ENCODE measurements at regions of chr7 and their contacts with region 1.

Region 1: DNA sequence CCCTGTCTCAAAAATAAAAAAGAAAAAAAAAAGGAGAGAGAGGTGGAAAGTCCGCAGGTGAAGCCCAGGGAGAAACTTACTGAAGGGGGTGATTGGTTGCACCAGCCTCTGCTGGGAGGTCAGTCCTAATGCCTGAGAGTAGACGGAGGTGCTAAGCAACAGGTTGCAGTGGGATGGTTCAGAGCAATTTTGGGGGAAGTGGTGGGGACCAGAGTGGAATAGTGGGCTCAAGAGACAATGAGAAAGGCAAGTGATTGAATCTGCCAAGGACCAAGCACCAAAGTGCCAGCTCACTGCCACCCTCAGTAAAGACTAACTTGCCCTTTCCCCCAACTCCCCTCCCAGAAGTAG is 90.2 kb upstream of the GTF2I start:
- H3K4me3 ChIP-seq: no peak overlapping the region
- H3K27ac ChIP-seq: no peak overlapping the region
- H3K4me1 ChIP-seq: no peaks in the 10 kb centered on the region
- CTCF ChIP-seq: no peak

Region 2: DNA sequence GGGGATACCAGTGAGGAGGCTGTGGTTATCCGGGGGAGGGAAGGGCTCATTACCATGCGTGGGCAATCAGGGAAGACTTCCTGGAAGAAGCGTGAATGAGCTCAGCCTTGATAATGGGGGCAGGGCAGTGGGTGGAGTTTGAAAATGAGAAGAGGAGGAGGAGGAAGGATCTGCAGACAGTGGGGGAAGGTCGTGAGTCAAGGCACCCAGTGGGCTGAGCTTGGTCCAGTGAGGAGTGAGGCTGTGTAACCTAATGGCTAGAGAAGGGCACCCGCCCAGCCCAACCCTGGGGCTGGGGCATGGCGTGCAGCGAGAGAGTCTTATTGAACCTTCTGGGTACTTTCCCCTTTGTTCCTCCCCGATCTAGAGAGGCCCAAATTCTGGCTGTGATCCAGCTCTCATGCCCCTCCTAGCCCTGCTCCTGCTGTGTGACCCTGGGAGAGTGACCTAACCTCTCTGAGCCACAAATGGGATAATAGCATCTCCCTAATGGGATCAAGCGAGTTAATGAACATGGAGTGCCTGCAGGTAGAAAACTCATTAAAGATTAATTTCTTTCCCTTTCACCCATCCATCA is 246.6 kb before region 1 on chr7:
- CTCF ChIA-PET with region 1: no interaction called
- POLR2A ChIA-PET with region 1: no interaction called
- H3K4me3 ChIP-seq: no peak overlapping the region
- H3K27ac ChIP-seq: no peak overlapping the region
- H3K4me1 ChIP-seq: no peaks in the 10 kb centered on the region
- CTCF ChIP-seq: no peak

Region 3: DNA sequence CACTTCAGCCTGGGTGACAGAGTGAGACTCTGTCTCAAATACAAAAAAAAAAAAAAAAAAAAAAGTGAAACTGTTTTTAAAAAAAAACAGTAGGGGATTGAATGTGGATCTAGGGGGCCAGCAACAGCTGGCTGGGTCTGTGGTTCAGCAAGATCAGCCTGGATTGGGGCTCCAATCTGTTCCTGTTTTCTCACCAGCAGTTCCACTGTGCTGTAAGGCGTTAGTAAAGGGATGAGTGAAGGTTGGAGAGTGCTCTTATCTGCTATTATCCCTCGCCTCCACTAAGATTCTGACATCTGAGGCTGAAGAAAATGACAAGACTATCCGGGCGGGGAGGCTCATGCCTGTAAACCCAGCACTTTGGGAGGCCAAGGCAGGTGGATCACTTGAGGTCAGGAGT is 155.2 kb before region 1 on chr7:
- CTCF ChIA-PET with region 1: interaction called, 33 read pairs
- POLR2A ChIA-PET with region 1: no interaction called
- H3K4me3 ChIP-seq: no peak overlapping the region
- H3K27ac ChIP-seq: no peak overlapping the region
- H3K4me1 ChIP-seq: no peaks in the 10 kb centered on the region
- CTCF ChIP-seq: no peak

Region 4: GRCh38 chr7:74417419-74417971 is 149.8 kb before region 1 on chr7:
- CTCF ChIA-PET with region 1: interaction called, 33 read pairs
- POLR2A ChIA-PET with region 1: no interaction called
- H3K4me3 ChIP-seq: no peak overlapping the region
- H3K27ac ChIP-seq: no peak overlapping the region
- H3K4me1 ChIP-seq: no peaks in the 10 kb centered on the region
- CTCF ChIP-seq: peak; percentile 80

Region 5: DNA sequence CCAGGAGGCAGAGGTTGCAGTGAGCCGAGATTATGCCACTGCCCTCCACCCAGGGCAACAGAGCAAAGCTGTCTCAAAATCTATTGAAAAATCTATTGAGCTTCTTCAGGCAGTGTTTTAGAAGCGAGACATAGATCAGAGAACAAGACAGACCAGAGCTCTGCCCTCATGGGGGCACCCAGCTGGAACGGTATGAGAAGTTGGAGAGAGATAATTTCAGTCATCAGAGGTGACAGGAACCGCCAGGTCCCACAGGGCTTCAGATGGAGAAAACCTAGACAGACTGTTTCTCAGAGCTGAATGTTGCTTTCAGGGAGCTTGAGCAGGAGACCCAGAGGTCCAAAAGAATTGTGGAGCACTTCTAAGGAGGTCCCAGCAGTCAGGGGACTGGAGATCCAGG is 127.7 kb before region 1 on chr7:
- CTCF ChIA-PET with region 1: interaction called, 10 read pairs
- POLR2A ChIA-PET with region 1: no interaction called
- H3K4me3 ChIP-seq: no peak overlapping the region
- H3K27ac ChIP-seq: no peak overlapping the region
- H3K4me1 ChIP-seq: 0 out of 2 replicates have a peak, but pooled peaks cover 2% of the 10 kb centered on the region
- CTCF ChIP-seq: no peak

Region 6: DNA sequence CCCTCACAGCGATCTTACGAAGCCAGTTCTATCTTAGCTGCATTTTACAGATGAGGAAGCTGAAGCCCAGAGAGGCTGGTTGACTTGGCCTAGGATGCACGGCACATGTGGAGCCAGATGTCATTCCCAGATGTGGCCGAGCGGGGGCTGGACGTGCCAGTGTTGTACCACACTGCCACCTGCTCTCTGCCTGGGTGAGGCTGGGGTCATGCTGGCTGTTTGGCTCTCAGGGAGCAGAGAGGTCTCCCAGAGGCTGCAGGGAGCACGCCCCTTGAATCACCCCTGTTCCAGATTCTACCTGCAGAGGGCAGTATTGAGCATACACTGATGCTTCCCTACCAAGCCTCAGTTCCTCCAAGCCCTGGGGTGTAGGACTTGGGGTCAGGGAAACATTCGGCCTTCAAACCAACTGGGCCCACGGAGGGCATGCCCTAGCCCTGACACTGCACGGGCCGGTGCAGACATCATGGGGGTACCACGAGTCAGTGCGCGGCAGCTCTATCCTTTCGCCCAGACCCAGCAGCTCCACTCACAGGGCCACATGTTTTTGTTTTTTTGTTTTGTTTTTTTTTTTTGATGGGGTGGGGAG is 117.4 kb before region 1 on chr7:
- CTCF ChIA-PET with region 1: interaction called, 24 read pairs
- POLR2A ChIA-PET with region 1: no interaction called
- H3K4me3 ChIP-seq: no peak overlapping the region
- H3K27ac ChIP-seq: no peak overlapping the region
- H3K4me1 ChIP-seq: peaks cover 2% of the 10 kb centered on the region
- CTCF ChIP-seq: peak; percentile 57; the same call in 1 of the 2 replicates

Region 7: GRCh38 chr7:74554178-74554577 is 13.1 kb before region 1 on chr7:
- CTCF ChIA-PET with region 1: interaction called, 22 read pairs
- POLR2A ChIA-PET with region 1: no interaction called
- H3K4me3 ChIP-seq: no peak overlapping the region
- H3K27ac ChIP-seq: no peak overlapping the region
- H3K4me1 ChIP-seq: no peaks in the 10 kb centered on the region
- CTCF ChIP-seq: no peak

Region 8: GRCh38 chr7:74606101-74606908 is 39.0 kb after region 1 on chr7:
- CTCF ChIA-PET with region 1: no interaction called
- POLR2A ChIA-PET with region 1: no interaction called
- H3K4me3 ChIP-seq: peak overlapping the region; percentile 30
- H3K27ac ChIP-seq: 0 out of 2 replicates have a peak overlapping the region, but pooled peaks have one; percentile 16
- H3K4me1 ChIP-seq: no peaks in the 10 kb centered on the region
- CTCF ChIP-seq: no peak

Measured in HEK293 (cell line).